K562 (cell line): ENCODE measurements at regions of chrX and their contacts with region 1.

Region 1: DNA sequence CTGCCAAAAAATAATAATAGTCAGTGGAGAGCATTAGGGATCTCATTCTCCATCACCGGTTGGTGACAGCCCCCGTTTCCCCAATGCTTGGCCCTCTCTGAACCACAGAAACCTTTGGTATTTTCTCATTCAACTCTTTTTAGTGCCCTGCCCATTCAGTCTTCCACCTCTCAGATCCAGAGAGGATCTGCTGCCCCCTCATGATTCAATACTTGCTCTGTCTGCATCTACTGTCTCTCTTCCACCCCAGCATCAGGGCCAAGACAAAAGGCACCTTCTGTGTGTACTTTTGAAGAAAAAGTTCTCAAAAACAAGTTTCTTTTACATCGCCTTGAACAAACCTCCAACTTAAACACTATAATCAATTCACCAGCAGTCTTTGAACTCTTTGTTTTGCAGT is 19.3 kb downstream of the CLTRN start:
- DNase-seq: peak in 1 of 4 experiments; percentile 8
- ATAC-seq: no peak; the same call in 2 of the 3 replicates
- H3K4me3 ChIP-seq: no peak overlapping the region
- H3K27ac ChIP-seq: no peak overlapping the region
- H3K4me1 ChIP-seq: no peaks in the 10 kb centered on the region
- H3K27me3 ChIP-seq: no peaks in the 10 kb centered on the region; a peak in 1 of 5 replicates
- CTCF ChIP-seq: 0 out of 6 replicates have a peak, but pooled peaks of 1 of the 3 experiments have one; percentile 21
- EP300 ChIP-seq: no peak
- POLR2A ChIP-seq: no peak
- RAD21 ChIP-seq: peak in 1 of 2 experiments; percentile 37; a peak in 2 of 4 replicates

Region 2: GRCh38 chrX:15404401-15405096 is 240.7 kb before region 1 on chrX:
- CTCF ChIA-PET with region 1: no interaction called
- POLR2A ChIA-PET with region 1: no interaction called
- in situ Hi-C with region 1: no loop called
- intact Hi-C with region 1: no loop called
- DNase-seq: peak in 1 of 4 experiments; percentile 12
- ATAC-seq: peak; percentile 29; the same call in 1 of the 3 replicates
- H3K4me3 ChIP-seq: no peak overlapping the region
- H3K27ac ChIP-seq: no peak overlapping the region
- H3K4me1 ChIP-seq: peaks cover 0 to 5% of the 10 kb centered on the region in 2 experiments; a peak in 3 of 5 replicates
- H3K27me3 ChIP-seq: no peaks in the 10 kb centered on the region
- CTCF ChIP-seq: no peak
- EP300 ChIP-seq: no peak
- POLR2A ChIP-seq: no peak
- RAD21 ChIP-seq: no peak

Region 3: DNA sequence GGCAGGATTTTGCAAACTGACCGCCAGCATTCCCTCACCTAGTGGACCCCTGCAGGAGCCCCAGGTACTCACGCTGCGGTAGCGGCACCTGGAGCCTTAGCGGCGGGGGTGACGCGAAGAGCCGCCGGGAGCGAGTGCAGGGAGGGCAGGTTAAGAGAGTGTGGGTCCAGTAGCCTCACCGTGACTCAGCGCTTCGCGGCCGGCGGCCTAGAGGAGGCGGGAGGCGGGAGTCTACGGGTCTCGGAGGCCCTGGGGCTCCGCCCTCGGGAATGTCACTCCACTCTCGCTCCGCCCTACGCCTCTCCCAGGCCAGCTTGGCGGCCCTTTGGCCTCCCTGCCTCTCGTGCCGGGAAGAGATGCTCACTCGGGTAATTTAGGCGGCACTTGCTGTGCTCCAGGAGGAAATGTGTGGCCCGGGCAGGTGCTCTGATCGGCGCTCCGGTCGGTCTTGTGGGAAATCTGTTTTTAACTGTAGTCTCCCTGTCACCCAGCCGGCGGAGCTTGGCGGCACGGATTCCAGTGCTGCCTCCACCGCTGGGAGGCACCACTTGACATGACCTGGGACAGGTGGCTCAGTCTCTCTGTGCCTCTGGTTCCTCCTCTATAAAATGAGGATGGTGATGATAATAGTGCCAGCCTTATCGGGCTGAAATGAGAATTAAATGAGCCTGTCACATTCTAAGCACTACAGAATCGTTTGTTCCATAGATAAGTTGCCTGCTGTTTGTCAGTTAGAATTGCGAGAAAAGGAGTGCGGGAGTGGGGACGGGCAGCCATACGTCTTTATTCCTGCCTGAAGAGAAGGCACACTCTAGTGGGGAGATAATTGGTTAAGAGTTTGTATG is 151.9 kb before region 1 on chrX and contains the start of gene PIR:
- CTCF ChIA-PET with region 1: no interaction called
- POLR2A ChIA-PET with region 1: no interaction called
- in situ Hi-C with region 1: no loop called
- intact Hi-C with region 1: loop called (anchors 5 kb)
- DNase-seq: peak; percentile 88 to 95 (median 90)
- ATAC-seq: peak; percentile 99
- H3K4me3 ChIP-seq: peak within 1 kb of the TSS; percentile 44
- H3K27ac ChIP-seq: peak within 1 kb of the TSS; percentile 77
- H3K4me1 ChIP-seq: peaks cover 10 to 20% of the 10 kb centered on the region in 2 experiments; a peak in 3 of 5 replicates
- H3K27me3 ChIP-seq: no peaks in the 10 kb centered on the region
- CTCF ChIP-seq: peak; percentile 60 to 82 (median 71)
- EP300 ChIP-seq: peak; percentile 51
- POLR2A ChIP-seq: peak; percentile 64
- RAD21 ChIP-seq: peak; percentile 35 to 43; a peak in 3 of 4 replicates
- polyA plus RNA-seq, gene PIR: 25.1 to 27.3 TPM